Common myeloid progenitor, CD34-positive (primary cell): ENCODE measurements at regions of chr18 and their contacts with region 1.

Region 1: DNA sequence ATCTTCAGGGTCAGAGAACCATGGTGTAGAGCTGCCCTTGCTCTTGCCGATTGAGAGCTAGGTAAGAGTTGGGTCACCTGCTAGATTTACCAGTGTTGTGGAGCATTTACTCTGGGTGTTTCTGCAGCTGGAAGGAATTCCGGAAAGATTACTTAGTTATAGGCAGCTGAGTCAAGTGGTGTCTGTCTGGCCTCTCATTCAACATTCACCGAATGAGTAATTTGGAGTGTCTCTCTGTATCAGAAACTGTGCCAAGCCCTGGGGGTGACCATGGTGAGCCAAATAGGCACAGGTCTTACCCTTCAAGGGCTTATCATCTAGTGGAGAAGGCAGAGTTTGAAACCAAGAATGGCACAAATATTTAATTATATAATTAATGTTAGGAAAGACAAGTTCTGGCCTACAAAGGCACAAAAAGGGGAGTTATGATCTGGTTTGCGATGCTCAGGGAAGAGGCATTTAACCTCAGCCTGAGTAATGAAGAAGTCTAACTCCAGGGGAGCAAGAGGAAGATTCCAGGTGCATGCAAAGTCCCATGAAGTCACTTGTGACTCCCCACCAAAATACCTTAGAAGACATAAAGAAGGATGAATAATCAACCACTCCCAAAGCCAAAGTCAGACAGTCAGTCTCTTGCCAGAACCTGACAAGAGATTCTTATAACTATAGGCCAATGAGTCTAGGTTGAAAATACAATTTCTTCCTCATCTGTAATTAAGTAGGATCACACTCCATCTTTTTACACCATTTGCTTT is 12.5 kb downstream of the SETBP1 start:
- DNase-seq: no peak
- H3K4me3 ChIP-seq: no peak overlapping the region
- H3K27ac ChIP-seq: no peak overlapping the region
- H3K4me1 ChIP-seq: no peaks in the 10 kb centered on the region
- H3K27me3 ChIP-seq: no peaks in the 10 kb centered on the region

Region 2: GRCh38 chr18:44682201-44682870 is 10.9 kb before region 1 on chr18:
- CTCF ChIA-PET with region 1: interaction called, 18 read pairs
- POLR2A ChIA-PET with region 1: interaction called, 3 read pairs
- DNase-seq: peak in 2 of 3 donors; percentile 34 to 44
- H3K4me3 ChIP-seq: peak overlapping the region in 3 of 7 experiments; percentile 8 to 90 (median 82)
- H3K27ac ChIP-seq: no peak overlapping the region
- H3K4me1 ChIP-seq: peaks cover 13 to 45% (median 24%) of the 10 kb centered on the region in 4 experiments
- H3K27me3 ChIP-seq: peaks cover 0 to 7% (median 0%) of the 10 kb centered on the region in 5 experiments

Region 3: GRCh38 chr18:44771956-44772917 is 79.0 kb after region 1 on chr18:
- CTCF ChIA-PET with region 1: no interaction called
- POLR2A ChIA-PET with region 1: no interaction called
- DNase-seq: no peak
- H3K4me3 ChIP-seq: no peak overlapping the region
- H3K27ac ChIP-seq: no peak overlapping the region
- H3K4me1 ChIP-seq: peaks cover 0 to 7% (median 0%) of the 10 kb centered on the region in 4 experiments
- H3K27me3 ChIP-seq: peaks cover 0 to 2% (median 0%) of the 10 kb centered on the region in 5 experiments

Region 4: DNA sequence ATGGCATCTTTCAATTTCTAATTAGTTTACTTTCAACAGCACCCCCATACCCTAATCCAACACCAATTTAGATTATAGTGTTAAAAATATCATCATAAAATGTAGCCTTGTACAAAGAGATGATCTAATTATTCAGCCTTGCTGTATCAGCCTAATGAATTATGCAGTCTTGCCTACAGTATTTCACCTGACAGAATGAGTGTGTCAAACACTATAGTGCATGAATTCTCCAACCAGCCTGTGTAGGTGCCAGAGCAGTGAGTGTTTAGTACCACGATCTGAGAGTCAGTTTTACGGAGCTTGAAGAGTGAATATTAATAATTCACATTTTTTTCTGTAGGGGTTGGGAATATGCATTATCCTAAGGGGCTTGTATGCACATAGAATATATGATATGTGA is 510.5 kb after region 1 on chr18:
- CTCF ChIA-PET with region 1: no interaction called
- POLR2A ChIA-PET with region 1: no interaction called
- DNase-seq: no peak
- H3K4me3 ChIP-seq: no peak overlapping the region
- H3K27ac ChIP-seq: no peak overlapping the region
- H3K4me1 ChIP-seq: no peaks in the 10 kb centered on the region
- H3K27me3 ChIP-seq: no peaks in the 10 kb centered on the region